Activated CD8-positive, alpha-beta memory T cell treated with anti-CD3 and anti-CD28 coated beads, Interleukin-2, amount 10 ng/mL, durations not matched to agents 7 days and 5 days (primary cell): ENCODE measurements at regions of chr19 and their contacts with region 1.

Region 1: GRCh38 chr19:13774217-13775191 is at the start of gene C19orf53:
- DNase-seq: peak; percentile 93
- ATAC-seq: peak; percentile 99
- H3K4me3 Mint-ChIP-seq: peak within 1 kb of the TSS; percentile 95
- H3K27ac Mint-ChIP-seq: peak within 1 kb of the TSS; percentile 84
- H3K4me1 Mint-ChIP-seq: peaks cover 20% of the 10 kb centered on the region
- H3K27me3 Mint-ChIP-seq: no peaks in the 10 kb centered on the region
- total RNA-seq, gene C19orf53: 77.7 to 94.0 TPM

Region 2: GRCh38 chr19:13764101-13764807 is 10.2 kb before region 1 on chr19 and contains the start of gene MRI1:
- CTCF ChIA-PET with region 1: interaction called, 15 read pairs
- DNase-seq: peak; percentile 76
- ATAC-seq: peak; percentile 89
- H3K4me3 Mint-ChIP-seq: peak within 1 kb of the TSS; percentile 79
- H3K27ac Mint-ChIP-seq: peak within 1 kb of the TSS; percentile 80
- H3K4me1 Mint-ChIP-seq: peaks cover 24% of the 10 kb centered on the region
- H3K27me3 Mint-ChIP-seq: no peaks in the 10 kb centered on the region
- total RNA-seq, gene MRI1: 51.7 to 59.3 TPM